ENCODE measurements at regions of chr15 and their contacts with region 1.

Region 1: DNA sequence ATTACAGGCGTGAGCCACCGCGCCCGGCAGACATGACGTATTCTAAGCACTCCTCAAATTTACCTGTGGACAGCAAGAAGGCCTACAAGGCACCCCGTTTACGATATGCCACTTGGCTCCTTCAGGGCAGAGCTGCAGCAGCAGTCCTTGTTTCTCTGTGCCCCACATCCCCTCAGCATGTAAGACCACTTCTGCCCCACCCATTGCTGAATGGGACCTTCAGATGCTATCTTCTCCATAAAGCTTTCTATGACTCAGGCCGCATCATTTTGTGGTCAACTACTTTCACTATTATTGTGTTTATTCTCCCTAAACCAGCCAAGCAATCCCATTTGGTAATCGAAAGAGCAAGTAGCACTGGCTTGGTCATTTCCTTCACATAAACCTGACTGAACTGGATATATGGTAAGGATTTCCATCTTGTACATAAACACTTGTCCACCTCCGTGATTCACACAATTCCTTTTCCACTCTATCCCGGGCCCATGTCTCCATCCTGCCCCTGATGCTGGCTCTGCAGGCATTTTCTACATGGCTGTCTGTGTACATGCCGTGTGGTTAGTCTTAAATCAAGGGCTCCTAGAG is 25.7 kb downstream of the LIPC start:
- DNase-seq: peak; percentile 64
- ATAC-seq: peak; percentile 64
- H3K4me3 Mint-ChIP-seq: no peak overlapping the region
- H3K27ac Mint-ChIP-seq: peak overlapping the region; percentile 72
- H3K4me1 Mint-ChIP-seq: peaks cover 81% of the 10 kb centered on the region
- H3K27me3 Mint-ChIP-seq: no peaks in the 10 kb centered on the region

Region 2: GRCh38 chr15:58469432-58470353 is 12.2 kb after region 1 on chr15:
- CTCF ChIA-PET with region 1: interaction called, 34 read pairs
- POLR2A ChIA-PET with region 1: interaction called, 45 read pairs
- DNase-seq: no peak
- ATAC-seq: no peak
- H3K4me3 Mint-ChIP-seq: no peak overlapping the region
- H3K27ac Mint-ChIP-seq: no peak overlapping the region
- H3K4me1 Mint-ChIP-seq: peaks cover 62% of the 10 kb centered on the region
- H3K27me3 Mint-ChIP-seq: no peaks in the 10 kb centered on the region

Region 3: DNA sequence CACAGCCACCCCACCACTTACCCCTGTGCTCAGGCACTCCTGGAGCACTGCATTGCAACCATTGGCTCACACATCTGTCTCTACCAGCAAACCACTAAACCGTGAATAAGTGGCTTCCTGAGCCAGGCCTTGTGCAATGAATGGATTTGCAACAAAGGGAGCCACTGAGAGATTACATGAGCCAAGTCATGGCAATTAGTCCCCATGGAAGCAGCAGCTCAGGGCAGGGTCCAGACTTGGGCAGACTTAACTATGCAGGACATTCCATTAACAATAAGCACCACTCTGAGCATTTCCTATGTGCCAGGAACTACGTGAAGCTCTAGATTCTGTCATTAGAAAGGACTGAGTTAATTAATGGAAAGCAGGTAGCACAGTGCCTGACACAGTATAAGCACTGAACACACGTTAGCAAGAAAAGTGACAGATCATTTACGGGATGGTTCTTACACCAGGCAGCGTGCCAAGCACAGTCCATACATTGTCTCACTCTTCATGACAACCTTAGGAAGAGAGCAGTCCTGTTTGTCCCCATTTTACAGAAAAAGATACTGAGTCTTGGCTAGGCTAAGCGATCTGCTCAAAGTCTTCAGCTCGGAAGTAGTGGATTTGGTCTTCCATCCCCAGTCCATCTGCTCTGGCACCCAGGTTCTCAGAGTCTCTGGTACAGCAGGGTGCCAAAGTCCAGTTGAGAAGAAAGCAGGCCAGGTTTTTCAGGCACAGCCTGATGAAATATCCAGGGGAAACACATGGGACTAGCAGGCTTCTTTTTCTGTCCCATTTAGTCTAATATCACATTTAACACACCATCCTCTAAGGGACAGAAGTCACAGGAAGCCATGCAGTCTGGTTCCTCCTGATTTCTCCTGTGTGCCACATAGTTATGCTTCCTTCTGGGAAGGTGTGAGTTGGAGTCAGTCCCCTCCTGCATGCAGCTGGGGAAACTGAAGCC is 18.4 kb after region 1 on chr15:
- CTCF ChIA-PET with region 1: interaction called, 34 read pairs
- POLR2A ChIA-PET with region 1: interaction called, 45 read pairs
- DNase-seq: peak; percentile 35
- ATAC-seq: no peak
- H3K4me3 Mint-ChIP-seq: peak overlapping the region; percentile 44
- H3K27ac Mint-ChIP-seq: peak overlapping the region; percentile 95
- H3K4me1 Mint-ChIP-seq: peaks cover 78% of the 10 kb centered on the region
- H3K27me3 Mint-ChIP-seq: no peaks in the 10 kb centered on the region

Region 4: DNA sequence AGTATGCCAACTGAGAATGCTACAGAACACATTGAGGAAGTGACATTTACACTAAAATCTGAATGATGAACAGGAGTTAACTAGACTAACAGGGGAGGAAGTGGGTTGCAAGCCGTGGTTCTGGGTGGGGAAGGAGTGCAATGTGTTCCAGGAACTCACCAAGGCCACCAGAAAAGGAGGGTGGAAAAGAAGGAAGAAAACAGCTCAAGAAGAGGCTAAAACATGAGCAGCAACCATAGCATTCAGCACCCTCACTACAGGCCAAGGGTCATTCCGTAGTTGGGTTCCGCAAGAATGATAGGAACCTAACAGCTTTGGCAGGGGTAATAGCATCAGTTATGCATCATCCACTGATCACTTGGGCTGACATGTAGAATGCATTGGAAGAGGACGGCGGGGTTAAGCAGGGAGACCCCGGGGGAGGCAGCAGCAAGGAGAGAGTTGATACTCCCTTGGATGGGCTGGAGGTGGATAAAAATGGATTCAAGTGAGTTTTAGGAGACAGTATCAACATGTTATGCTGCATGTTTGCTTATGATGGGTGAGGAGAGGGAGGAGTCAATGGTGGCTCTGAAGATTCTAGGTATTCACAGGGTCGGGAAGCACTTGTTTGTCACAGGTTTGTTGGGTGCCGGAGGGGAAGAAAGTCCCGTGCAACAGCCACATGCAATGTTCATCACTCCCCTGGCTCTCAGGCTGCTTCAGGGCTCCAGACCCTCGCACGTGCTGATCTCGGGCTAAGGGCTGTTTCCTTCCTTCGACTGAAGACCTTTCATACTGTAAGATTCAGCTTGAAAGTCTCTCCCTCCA is 27.5 kb after region 1 on chr15:
- CTCF ChIA-PET with region 1: interaction called, 5 read pairs
- POLR2A ChIA-PET with region 1: interaction called, 12 read pairs
- DNase-seq: peak; percentile 85
- ATAC-seq: peak; percentile 81
- H3K4me3 Mint-ChIP-seq: peak overlapping the region; percentile 60
- H3K27ac Mint-ChIP-seq: peak overlapping the region; percentile 95
- H3K4me1 Mint-ChIP-seq: peaks cover 53% of the 10 kb centered on the region
- H3K27me3 Mint-ChIP-seq: no peaks in the 10 kb centered on the region

Region 5: DNA sequence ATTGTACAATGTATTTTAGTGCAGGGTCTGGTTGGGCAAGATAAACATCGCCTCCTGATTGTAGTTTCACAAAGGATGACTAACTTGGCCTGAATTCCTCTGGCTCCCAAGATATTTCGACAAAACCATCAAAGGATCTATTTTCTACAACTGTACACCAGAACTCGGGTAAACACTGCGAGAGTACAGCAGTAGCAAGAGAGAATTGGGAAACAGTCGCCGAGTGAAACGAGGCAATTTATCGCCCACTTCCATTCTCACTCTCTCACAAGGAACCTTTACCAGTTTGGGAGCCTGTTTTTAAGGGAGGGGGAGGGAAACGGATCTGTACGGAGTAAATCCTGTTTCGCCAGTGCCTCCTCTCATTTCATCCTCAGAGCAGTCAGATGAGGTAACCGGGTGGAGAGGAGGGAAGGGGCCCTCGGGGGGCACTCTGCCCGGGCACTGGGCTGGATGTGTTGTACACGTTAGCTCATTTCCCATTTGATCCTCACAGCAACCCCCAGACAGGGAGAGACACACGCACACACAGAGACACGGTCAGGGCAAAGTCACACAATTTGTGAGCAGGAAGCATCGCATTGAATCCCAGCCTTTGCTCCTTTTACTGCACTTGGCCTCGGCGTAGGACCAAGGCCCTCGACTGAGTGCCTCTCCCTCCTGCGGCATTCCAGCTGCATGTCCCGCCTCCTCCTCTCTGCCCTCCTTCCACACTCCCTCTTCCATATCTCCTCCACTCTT is 94.5 kb after region 1 on chr15:
- CTCF ChIA-PET with region 1: no interaction called
- POLR2A ChIA-PET with region 1: no interaction called
- DNase-seq: no peak
- ATAC-seq: no peak
- H3K4me3 Mint-ChIP-seq: no peak overlapping the region
- H3K27ac Mint-ChIP-seq: peak overlapping the region; percentile 83
- H3K4me1 Mint-ChIP-seq: peaks cover 39% of the 10 kb centered on the region
- H3K27me3 Mint-ChIP-seq: peaks cover 4% of the 10 kb centered on the region